Gastrocnemius medialis (tissue), 4 donors: ENCODE measurements at regions of chr22 and their contacts with region 1.

Region 1: GRCh38 chr22:37745548-37746365 is 48.9 kb downstream of the TRIOBP start:
- DNase-seq: peak; percentile 87 to 89
- ATAC-seq: peak; percentile 86
- H3K4me3 ChIP-seq: peak overlapping the region; percentile 84 to 99 (median 96)
- H3K27ac ChIP-seq: peak overlapping the region; percentile 86 to 93 (median 88)
- H3K4me1 ChIP-seq: peaks cover 28 to 31% of the 10 kb centered on the region in 2 donors
- H3K27me3 ChIP-seq: no peaks in the 10 kb centered on the region
- CTCF ChIP-seq: no peak
- POLR2A ChIP-seq: peak; percentile 67 to 72

Region 2: DNA sequence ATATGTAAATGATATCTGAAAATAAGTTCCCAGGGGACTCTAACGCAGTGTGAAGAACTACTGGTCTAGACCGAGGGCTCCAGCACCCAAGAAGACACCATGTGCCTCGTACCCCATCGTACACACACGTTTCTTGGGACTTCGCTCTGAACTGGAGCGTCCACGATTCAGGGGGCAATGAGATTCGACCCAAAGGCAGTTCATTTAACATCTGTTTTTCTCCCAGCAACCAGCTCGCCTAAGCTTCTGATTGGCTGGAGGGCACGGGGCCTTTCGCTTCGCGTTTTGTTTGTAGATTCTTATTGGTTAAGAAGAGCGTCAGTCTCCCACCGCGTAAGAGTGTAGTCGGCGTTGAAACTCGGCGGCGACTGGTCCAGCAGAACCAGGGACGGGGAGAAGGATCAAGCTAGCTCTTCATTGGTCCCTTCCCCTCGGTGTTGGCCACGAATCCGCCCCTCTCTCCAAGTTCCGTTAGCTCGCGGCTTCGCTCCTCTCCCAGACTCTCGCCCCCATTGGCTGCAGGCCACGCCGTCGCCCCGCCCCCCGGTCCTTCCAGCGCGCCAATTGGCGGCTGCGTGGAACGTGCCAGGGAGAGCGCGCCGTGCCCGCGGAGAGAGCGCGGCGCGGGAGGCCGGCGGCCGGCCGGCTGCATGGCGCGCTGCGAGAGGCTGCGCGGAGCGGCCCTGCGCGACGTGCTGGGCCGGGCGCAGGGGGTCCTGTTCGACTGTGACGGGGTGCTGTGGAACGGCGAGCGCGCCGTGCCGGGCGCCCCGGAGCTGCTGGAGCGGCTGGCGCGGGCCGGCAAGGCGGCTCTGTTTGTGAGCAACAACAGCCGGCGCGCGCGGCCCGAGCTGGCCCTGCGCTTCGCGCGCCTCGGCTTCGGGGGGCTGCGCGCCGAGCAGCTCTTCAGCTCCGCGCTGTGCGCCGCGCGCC is 87.4 kb before region 1 on chr22 and contains the start of gene PDXP:
- in situ Hi-C with region 1: no loop called
- intact Hi-C with region 1: loop called (anchors 5 kb)
- DNase-seq: peak; percentile 100
- ATAC-seq: peak; percentile 97 to 99
- H3K4me3 ChIP-seq: peak within 1 kb of the TSS; percentile 57 to 65 (median 63)
- H3K27ac ChIP-seq: peak within 1 kb of the TSS; percentile 81 to 88 (median 86)
- H3K4me1 ChIP-seq: peaks cover 35 to 39% of the 10 kb centered on the region in 2 donors
- H3K27me3 ChIP-seq: no peaks in the 10 kb centered on the region
- CTCF ChIP-seq: peak in 1 of 5 experiments; percentile 14
- POLR2A ChIP-seq: peak; percentile 90 to 94
- total RNA-seq, gene PDXP: 10.3 to 28.7 (median 16.6) TPM

Region 3: DNA sequence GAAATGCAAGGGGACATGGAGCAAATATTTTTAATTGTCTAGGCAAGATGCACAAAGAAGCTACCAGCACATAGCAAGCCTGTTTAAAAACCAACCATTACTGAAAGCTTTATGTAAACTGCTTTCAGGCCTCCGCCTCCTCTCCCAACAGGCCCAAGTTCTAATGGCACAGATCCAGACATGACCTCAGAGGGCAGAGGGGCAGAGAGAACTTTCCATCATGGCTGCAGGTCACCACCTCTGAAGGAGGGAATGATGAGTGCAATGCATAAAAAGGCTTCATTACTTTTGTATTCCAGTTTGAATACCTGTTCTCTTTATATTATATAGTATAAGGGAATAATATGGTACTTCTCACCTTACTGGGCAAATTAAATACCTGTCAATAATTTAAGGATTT is 745.2 kb after region 1 on chr22:
- in situ Hi-C with region 1: no loop called
- intact Hi-C with region 1: no loop called
- DNase-seq: no peak
- ATAC-seq: peak in 1 of 2 donors; percentile 64
- H3K4me3 ChIP-seq: no peak overlapping the region
- H3K27ac ChIP-seq: peak overlapping the region; percentile 52 to 73 (median 58)
- H3K4me1 ChIP-seq: peaks cover 9 to 11% of the 10 kb centered on the region in 2 donors
- H3K27me3 ChIP-seq: no peaks in the 10 kb centered on the region
- CTCF ChIP-seq: no peak
- POLR2A ChIP-seq: no peak